ENCODE measurements at regions of chrX and their contacts with region 1.

Region 1: DNA sequence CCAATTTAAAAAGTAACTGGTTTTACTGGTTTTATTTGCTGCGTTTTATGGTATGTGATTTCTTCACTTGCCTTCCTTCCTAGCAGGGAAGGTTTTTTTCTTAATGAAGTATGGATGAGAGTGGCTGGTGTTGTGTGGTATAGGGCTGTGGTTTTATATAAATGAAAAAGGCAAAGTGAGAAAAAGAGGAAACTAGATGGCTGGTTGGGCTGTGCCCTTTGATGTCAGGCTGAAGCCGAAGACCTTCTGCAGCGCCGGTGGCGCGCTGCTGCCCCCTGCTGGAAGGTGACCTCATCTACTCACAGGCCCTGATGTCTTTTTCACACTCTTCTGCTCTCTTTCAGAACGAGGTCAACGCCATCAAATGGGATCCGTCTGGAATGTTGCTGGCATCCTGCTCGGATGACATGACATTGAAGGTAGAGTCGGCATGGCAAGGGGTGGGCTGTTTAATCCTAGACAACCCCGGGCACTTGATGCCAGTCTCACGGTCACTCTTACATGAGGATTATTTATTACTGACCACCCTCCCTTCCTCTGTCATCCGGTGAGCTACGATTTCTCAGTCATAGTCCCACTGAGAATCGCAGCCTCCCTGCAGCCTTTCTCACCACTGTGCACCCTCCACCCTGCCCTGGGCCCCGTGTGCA is 56.6 kb downstream of the GPR143 start:
- DNase-seq: peak; percentile 95
- H3K4me3 ChIP-seq: no peak overlapping the region
- H3K27ac ChIP-seq: no peak overlapping the region
- H3K4me1 ChIP-seq: peaks cover 0 to 9% (median 3%) of the 10 kb centered on the region in 6 donors
- H3K27me3 ChIP-seq: no peaks in the 10 kb centered on the region
- CTCF ChIP-seq: peak; percentile 47 to 84 (median 79)
- POLR2A ChIP-seq: no peak

Region 2: DNA sequence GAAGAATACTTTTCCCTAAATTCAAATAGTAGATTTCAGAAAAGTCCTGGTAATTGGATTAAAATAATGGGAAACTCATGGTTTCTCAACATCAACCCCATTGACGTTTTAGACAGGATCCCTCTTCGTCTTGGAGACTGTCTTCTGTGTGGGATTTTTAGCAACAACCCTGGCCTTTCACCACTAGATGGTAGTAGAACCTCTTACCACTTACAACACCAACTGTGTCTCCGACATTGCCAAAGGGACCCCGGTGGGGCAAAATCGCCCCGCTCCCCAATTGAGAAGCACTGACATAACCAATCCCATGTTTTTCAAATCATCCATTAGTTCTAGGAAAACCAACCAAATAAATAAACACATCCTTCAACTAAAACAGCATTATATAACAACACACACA is 960.2 kb before region 1 on chrX:
- intact Hi-C with region 1: loop called (anchors 5 kb)
- DNase-seq: no peak
- H3K4me3 ChIP-seq: no peak overlapping the region
- H3K27ac ChIP-seq: no peak overlapping the region
- H3K4me1 ChIP-seq: no peaks in the 10 kb centered on the region
- H3K27me3 ChIP-seq: peaks cover 0 to 12% (median 0%) of the 10 kb centered on the region in 7 donors
- CTCF ChIP-seq: peak in 8 of 11 experiments; percentile 11 to 44 (median 36)
- POLR2A ChIP-seq: no peak

Region 3: GRCh38 chrX:8815464-8816065 is 893.5 kb before region 1 on chrX:
- intact Hi-C with region 1: loop called (anchors 5 kb)
- DNase-seq: no peak
- H3K4me3 ChIP-seq: no peak overlapping the region
- H3K27ac ChIP-seq: no peak overlapping the region
- H3K4me1 ChIP-seq: no peaks in the 10 kb centered on the region
- H3K27me3 ChIP-seq: peaks cover 0 to 5% (median 0%) of the 10 kb centered on the region in 7 donors
- CTCF ChIP-seq: peak in 9 of 11 experiments; percentile 39 to 76 (median 69)
- POLR2A ChIP-seq: no peak

Region 4: DNA sequence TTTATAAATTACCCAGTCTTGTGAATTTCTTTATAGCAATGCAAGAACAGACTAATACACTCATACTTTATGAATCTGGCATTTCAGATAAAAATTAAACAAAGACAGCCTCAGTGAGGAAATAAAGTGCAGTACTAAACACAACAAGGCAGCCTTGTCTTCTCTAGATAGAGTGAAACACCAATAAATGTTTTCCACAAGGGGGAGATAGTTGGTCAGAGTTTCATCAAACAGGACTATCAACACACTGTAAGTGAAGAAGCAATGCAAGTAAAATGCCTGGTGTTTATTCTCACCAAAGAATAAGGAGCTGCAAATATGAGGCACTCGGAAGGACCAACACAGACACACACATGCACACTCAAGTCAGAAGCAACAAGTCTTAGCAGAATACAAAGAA is 737.9 kb before region 1 on chrX:
- intact Hi-C with region 1: loop called (anchors 5 kb)
- DNase-seq: no peak
- H3K4me3 ChIP-seq: no peak overlapping the region
- H3K27ac ChIP-seq: no peak overlapping the region
- H3K4me1 ChIP-seq: no peaks in the 10 kb centered on the region
- H3K27me3 ChIP-seq: no peaks in the 10 kb centered on the region
- CTCF ChIP-seq: peak in 9 of 11 experiments; percentile 18 to 44 (median 35)
- POLR2A ChIP-seq: no peak

Measured in spleen (tissue), 13 donors.